Mammary epithelial cell (primary cell): ENCODE measurements at regions of chr3 and their contacts with region 1.

Region 1: DNA sequence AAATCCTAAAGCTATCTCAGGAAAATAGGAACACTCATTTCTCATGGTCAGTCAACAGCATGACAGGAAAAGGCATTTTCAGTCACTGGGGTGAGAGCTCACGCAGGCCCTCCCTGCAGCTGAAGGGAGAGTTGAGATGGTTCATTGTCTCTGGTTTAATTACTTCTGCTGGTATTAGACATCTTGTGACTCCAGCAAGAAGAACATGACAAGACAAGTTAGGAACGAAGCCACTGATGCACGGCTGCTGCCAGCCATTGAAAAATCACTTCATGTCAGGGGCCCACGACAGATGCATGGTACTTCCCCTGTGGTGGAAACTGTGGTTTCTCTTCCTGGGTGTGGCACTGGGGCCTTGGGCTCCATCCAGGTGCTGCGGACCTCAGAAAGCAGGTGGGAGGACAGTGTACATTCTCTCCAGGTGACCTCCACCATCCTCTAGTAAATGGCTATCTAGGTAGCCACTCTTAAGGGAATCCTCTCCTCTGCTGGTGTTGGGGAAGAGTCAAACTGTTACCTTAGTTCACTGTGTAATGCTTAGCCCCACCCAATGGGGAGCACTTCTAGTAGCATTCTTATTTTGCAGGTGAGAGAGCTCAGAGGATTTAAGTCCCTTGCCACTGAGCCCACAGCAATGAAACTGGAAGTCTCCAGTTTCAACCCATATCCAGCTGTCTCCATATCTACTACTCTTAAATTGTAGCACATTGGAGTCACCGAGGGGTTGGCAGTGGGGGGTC is 274.2 kb downstream of the LRTM1 start:
- DNase-seq: peak; percentile 96
- H3K4me3 ChIP-seq: no peak overlapping the region
- H3K27ac ChIP-seq: peak overlapping the region; percentile 72
- H3K4me1 ChIP-seq: peaks cover 26% of the 10 kb centered on the region
- H3K27me3 ChIP-seq: no peaks in the 10 kb centered on the region
- CTCF ChIP-seq: peak in 1 of 2 donors; percentile 35

Region 2: DNA sequence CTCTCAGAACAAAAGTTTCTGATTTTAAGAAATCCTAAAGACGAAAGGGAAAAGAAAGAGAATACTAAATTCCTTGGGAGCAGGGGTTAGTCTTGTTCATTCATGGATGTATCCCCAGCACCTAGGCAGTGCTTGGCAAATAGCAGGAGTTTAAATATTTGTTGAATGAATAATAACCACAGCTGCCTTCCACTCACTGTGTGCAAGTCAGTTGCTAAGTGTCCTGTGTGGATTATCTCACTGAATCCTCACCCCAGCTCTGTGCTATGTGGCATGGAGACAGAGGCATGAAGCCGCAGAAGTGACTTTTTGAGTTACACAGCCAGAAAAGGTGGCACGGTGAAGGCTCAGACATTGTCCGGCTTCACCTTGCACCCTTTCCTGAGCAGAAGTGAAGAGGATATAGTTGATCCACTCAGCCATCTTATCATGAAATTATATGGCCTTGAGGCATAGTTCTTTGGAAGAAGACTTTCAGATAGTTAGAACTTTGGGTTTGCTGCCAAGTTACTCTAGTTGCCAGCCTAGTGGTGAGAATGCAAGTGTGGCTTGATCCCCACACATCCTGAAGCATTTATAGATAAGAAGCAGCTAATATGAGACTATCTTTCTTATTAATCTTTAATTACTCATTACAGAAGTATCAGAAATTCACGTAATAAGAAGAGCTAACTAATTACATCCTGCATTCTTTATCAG is 81.3 kb before region 1 on chr3:
- CTCF ChIA-PET with region 1: no interaction called
- dilution Hi-C with region 1: no loop called
- in situ Hi-C with region 1: no loop called
- intact Hi-C with region 1: loop called (anchors 5 kb)
- DNase-seq: peak; percentile 44
- H3K4me3 ChIP-seq: no peak overlapping the region
- H3K27ac ChIP-seq: no peak overlapping the region
- H3K4me1 ChIP-seq: peaks cover 6% of the 10 kb centered on the region
- H3K27me3 ChIP-seq: no peaks in the 10 kb centered on the region
- CTCF ChIP-seq: no peak